Activated CD4-positive, alpha-beta T cell treated with anti-CD3 and anti-CD28 coated beads for 36 hours (primary cell): ENCODE measurements at regions of chr12 and their contacts with region 1.

Region 1: GRCh38 chr12:72740064-72740463 is 467.9 kb downstream of the TRHDE start:
- DNase-seq: no peak
- ATAC-seq: no peak
- H3K4me3 Mint-ChIP-seq: no peak overlapping the region
- H3K27ac Mint-ChIP-seq: no peak overlapping the region
- H3K4me1 Mint-ChIP-seq: no peaks in the 10 kb centered on the region
- H3K27me3 Mint-ChIP-seq: no peaks in the 10 kb centered on the region

Region 2: DNA sequence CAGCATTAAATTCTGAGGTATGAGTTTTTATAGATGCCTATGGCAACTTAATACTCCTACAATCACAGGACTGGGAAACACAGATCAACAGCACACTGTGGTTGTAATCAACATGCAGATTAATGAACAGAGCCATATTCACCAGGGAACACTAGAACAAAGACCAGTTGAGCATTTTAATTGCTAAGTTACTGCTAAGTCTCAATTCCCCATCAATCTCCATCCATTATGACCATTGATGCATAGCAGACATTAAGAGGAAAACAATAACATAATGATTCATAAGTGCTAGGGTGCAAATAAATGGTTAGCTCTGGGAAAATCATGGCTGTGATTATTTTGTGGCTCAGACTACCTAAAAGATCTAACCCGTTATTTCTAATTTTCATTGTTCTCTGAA is 37.7 kb after region 1 on chr12:
- CTCF ChIA-PET with region 1: no interaction called
- POLR2A ChIA-PET with region 1: no interaction called
- intact Hi-C with region 1: loop called in 1 of 2 experiments (anchors 1 kb)
- DNase-seq: no peak
- ATAC-seq: no peak
- H3K4me3 Mint-ChIP-seq: no peak overlapping the region
- H3K27ac Mint-ChIP-seq: no peak overlapping the region
- H3K4me1 Mint-ChIP-seq: no peaks in the 10 kb centered on the region
- H3K27me3 Mint-ChIP-seq: no peaks in the 10 kb centered on the region